Heart left ventricle (tissue), 16 donors: ENCODE measurements at regions of chr16 and their contacts with region 1.

Region 1: DNA sequence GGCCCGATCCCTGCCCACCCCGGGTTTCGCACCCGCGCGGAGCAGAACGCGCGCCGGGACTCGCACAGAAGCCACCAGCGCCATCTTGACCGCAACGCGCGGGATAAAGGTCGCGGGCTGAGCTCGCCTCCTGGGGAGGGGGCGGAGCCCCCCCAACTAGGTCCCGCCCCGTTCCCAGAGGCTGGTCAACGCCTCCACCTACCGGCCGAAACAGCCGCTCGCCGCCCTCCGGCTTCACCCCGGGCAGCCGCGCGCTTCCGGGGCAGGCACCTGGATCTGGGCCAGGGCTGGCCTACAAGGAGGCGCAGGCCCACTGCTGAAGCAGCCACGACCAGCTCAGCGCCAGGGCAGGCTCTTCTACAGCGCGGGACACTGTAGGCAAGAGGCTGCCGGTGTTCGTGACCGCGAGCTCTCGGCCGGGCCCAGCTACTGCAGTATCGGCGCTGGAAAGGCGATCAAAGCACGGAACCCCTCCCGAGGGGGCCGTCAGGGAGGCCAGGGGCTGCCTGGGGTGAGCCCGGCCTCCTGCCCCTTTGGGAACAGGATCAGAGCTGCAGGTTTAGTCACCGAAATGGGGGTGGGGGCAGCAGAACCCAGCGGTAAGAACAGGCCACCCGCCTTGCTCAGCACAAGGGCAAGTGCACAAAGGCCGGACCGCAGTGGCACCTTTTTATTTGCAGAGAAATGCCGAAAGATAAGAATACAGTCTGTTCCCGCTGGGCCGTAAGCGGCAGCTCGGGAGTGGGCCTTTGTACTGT is at the start of gene ECI1:
- DNase-seq: peak; percentile 97 to 99 (median 97)
- ATAC-seq: peak; percentile 97 to 99 (median 98)
- H3K4me3 ChIP-seq: peak within 1 kb of the TSS; percentile 63 to 99 (median 80)
- H3K27ac ChIP-seq: peak within 1 kb of the TSS; percentile 88 to 97 (median 92)
- H3K4me1 ChIP-seq: peaks cover 2 to 24% (median 16%) of the 10 kb centered on the region in 12 donors
- H3K27me3 ChIP-seq: no peaks in the 10 kb centered on the region
- CTCF ChIP-seq: peak; percentile 60 to 96 (median 78)
- POLR2A ChIP-seq: peak; percentile 43 to 90
- total RNA-seq, gene ECI1: 84.6 to 178 (median 142) TPM

Region 2: GRCh38 chr16:2205104-2205966 is 46.3 kb before region 1 on chr16 and contains the start of gene MLST8:
- intact Hi-C with region 1: loop called in 1 of 10 experiments (anchors 5 kb)
- DNase-seq: peak; percentile 85 to 96 (median 89)
- ATAC-seq: peak; percentile 53 to 84 (median 82)
- H3K4me3 ChIP-seq: peak within 1 kb of the TSS; percentile 66 to 96 (median 80)
- H3K27ac ChIP-seq: peak within 1 kb of the TSS; percentile 95 to 100 (median 99)
- H3K4me1 ChIP-seq: peaks cover 3 to 27% (median 15%) of the 10 kb centered on the region in 12 donors
- H3K27me3 ChIP-seq: no peaks in the 10 kb centered on the region
- CTCF ChIP-seq: peak in 6 of 12 donors; percentile 13 to 43 (median 28)
- POLR2A ChIP-seq: peak; percentile 49 to 73
- total RNA-seq, gene MLST8: 19.8 to 49.0 (median 22.8) TPM

Region 3: GRCh38 chr16:2226245-2226793 is 25.3 kb before region 1 on chr16:
- intact Hi-C with region 1: loop called in 1 of 10 experiments (anchors 2 kb)
- DNase-seq: no peak
- ATAC-seq: no peak
- H3K4me3 ChIP-seq: no peak overlapping the region
- H3K27ac ChIP-seq: peak overlapping the region in 1 of 12 donors; percentile 22
- H3K4me1 ChIP-seq: peaks cover 0 to 31% (median 17%) of the 10 kb centered on the region in 12 donors
- H3K27me3 ChIP-seq: no peaks in the 10 kb centered on the region
- CTCF ChIP-seq: no peak
- POLR2A ChIP-seq: no peak

Region 4: GRCh38 chr16:2267913-2268666 is 16.4 kb after region 1 on chr16 and contains the start of gene RNPS1:
- intact Hi-C with region 1: loop called in 1 of 10 experiments (anchors 1 kb)
- DNase-seq: peak; percentile 96 to 98 (median 97)
- ATAC-seq: peak; percentile 93 to 98 (median 97)
- H3K4me3 ChIP-seq: peak within 1 kb of the TSS; percentile 65 to 98 (median 86)
- H3K27ac ChIP-seq: peak within 1 kb of the TSS; percentile 88 to 100 (median 96)
- H3K4me1 ChIP-seq: peaks cover 4 to 49% (median 24%) of the 10 kb centered on the region in 12 donors
- H3K27me3 ChIP-seq: no peaks in the 10 kb centered on the region
- CTCF ChIP-seq: peak in 1 of 12 donors; percentile 17
- POLR2A ChIP-seq: peak; percentile 58 to 92
- total RNA-seq, gene RNPS1: 100 to 154 (median 120) TPM